Stomach (tissue), 19 donors: ENCODE measurements at regions of chr11 and their contacts with region 1.

Region 1: DNA sequence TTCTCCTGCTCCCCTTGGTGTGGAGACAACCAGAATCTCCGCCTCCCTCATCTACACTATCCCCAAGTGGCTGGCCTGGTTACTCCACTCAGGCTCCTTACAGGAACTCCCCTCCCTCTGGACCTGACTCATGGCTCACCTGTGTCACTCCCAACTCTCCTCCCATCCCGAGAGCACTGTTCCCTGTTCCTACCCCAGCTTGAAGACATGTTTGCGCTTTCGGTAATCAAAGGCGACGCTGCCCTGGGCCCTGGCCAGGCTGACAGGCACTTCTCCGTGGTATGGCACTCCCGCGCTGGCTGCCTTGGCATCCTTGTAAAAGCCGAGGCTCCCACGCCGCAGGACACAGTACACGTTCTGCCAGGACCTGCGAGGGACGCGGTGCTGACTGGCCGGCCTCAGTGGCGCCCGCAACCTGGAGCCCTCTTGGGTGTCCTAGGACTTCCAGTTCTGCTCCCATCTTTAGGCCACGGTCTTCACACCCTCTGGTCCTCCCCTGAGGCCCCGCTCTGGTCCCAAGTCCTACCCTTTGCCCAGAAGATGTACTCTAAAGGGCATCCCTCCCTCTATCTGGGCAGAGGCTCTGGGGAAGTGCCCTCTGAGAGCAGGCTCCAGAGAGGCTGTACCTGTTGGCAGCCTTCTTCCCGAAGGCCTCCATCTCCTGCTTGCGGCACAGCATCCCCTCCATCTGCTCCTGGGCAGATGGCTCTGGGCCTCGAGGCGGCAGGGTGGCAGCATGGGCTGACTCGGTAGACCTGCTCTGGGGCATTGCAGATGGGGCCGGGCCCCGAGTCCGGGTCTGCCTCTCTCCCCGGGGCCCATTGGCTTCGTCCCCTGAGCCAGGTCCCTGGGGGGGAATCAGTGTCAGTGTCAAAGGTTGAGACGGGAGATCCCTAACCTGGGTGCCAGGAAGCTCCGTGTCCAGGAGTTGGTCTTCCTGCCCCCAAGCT is 9.4 kb upstream of the RBM4B start:
- DNase-seq: no peak
- H3K4me3 ChIP-seq: no peak overlapping the region
- H3K27ac ChIP-seq: no peak overlapping the region
- H3K4me1 ChIP-seq: no peaks in the 10 kb centered on the region
- H3K27me3 ChIP-seq: no peaks in the 10 kb centered on the region
- CTCF ChIP-seq: no peak
- EP300 ChIP-seq: no peak
- POLR2A ChIP-seq: no peak

Region 2: GRCh38 chr11:66195867-66196266 is 491.2 kb before region 1 on chr11:
- intact Hi-C with region 1: no loop called
- DNase-seq: peak; percentile 44 to 74
- H3K4me3 ChIP-seq: no peak overlapping the region
- H3K27ac ChIP-seq: peak overlapping the region in 2 of 5 donors; percentile 12 to 29
- H3K4me1 ChIP-seq: peaks cover 0 to 34% (median 13%) of the 10 kb centered on the region in 4 donors
- H3K27me3 ChIP-seq: no peaks in the 10 kb centered on the region
- CTCF ChIP-seq: no peak
- EP300 ChIP-seq: no peak
- POLR2A ChIP-seq: no peak

Region 3: DNA sequence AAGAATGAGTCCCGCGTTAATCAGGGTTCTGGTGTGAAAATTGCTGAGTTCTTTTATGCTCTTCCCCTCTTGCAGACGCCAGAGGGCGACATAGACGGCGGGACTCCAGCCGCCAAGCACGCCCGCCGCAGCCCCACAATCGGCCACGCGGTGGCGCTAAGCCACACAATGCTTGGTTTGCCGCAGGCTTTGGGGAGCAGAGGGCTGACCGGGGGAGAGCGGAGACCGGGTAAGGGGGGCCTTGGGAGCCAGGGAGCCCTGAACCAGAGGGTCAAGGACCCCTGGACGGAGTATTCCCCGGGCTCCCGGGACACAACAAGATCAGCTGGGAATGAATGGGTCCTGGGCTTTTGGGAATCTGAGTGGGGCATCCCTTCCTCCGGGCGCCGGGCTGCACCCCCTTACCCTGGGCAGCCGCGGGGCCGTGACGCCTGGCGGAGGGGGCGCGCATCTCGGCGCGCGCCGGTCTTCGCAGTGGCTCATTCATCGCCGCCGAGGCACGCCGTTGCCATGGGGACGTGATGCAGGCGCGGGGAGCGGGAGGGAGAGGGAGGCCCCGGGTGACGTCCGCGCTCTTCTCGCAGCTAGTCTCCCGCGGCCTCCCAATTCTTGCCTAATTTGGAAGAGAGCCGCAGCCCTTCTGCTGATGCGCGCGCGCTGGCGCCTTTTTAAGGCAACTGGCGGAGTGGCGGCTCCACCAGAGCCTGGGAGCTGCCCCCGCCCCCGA is 278.4 kb before region 1 on chr11:
- intact Hi-C with region 1: loop called (anchors 10 kb)
- DNase-seq: peak; percentile 91 to 96
- H3K4me3 ChIP-seq: peak overlapping the region; percentile 32 to 45 (median 38)
- H3K27ac ChIP-seq: peak overlapping the region in 4 of 5 donors; percentile 63 to 83 (median 76)
- H3K4me1 ChIP-seq: peaks cover 0 to 38% (median 24%) of the 10 kb centered on the region in 4 donors
- H3K27me3 ChIP-seq: peaks cover 0 to 50% (median 33%) of the 10 kb centered on the region in 3 donors
- CTCF ChIP-seq: peak in 6 of 7 experiments; percentile 91 to 100 (median 99)
- EP300 ChIP-seq: peak; percentile 69
- POLR2A ChIP-seq: no peak

Region 4: DNA sequence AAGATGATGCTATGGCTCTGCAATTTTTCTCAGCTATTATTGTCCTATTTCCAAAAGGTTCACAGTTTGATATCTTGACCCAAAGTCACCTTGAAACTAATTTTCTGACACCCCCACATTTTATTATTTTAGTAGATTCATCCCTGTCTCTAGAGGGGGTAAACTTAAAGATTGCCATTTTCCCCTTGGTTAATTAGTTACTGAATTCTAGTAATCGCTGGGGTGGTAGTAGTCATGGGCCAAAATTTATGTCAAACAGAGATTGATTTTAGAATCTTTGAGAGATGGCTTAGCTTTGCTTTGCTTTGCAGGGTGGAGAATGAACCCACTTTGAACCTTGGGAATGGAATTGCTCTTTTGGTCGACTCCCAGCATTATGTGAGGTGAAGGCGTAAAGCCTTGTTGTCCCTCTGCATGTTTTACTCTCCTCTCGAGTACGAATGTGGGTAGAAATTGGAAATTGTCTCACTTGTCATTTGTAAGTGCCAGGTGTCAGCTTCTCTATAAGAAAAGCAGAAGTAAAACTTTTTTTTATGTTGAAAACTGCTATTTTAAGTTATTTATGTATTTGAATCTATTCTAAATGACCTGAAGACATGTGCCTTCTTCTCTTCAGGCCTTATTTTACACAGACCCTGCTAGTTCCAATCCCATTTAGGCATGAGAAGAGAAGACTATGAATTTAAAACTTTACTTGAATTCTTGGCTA is 113.8 kb after region 1 on chr11:
- intact Hi-C with region 1: no loop called
- DNase-seq: no peak
- H3K4me3 ChIP-seq: no peak overlapping the region
- H3K27ac ChIP-seq: no peak overlapping the region
- H3K4me1 ChIP-seq: no peaks in the 10 kb centered on the region
- H3K27me3 ChIP-seq: no peaks in the 10 kb centered on the region
- CTCF ChIP-seq: no peak
- EP300 ChIP-seq: no peak
- POLR2A ChIP-seq: no peak